Prostate gland (tissue), 2 donors: ENCODE measurements at regions of chr3 and their contacts with region 1.

Region 1: GRCh38 chr3:64533617-64534317 is 154.0 kb downstream of the ADAMTS9 start:
- DNase-seq: peak; percentile 91
- H3K4me3 ChIP-seq: no peak overlapping the region
- H3K27ac ChIP-seq: peak overlapping the region; percentile 32 to 44
- H3K4me1 ChIP-seq: no peaks in the 10 kb centered on the region
- H3K27me3 ChIP-seq: no peaks in the 10 kb centered on the region
- CTCF ChIP-seq: peak; percentile 67 to 93 (median 86)
- POLR2A ChIP-seq: no peak

Region 2: DNA sequence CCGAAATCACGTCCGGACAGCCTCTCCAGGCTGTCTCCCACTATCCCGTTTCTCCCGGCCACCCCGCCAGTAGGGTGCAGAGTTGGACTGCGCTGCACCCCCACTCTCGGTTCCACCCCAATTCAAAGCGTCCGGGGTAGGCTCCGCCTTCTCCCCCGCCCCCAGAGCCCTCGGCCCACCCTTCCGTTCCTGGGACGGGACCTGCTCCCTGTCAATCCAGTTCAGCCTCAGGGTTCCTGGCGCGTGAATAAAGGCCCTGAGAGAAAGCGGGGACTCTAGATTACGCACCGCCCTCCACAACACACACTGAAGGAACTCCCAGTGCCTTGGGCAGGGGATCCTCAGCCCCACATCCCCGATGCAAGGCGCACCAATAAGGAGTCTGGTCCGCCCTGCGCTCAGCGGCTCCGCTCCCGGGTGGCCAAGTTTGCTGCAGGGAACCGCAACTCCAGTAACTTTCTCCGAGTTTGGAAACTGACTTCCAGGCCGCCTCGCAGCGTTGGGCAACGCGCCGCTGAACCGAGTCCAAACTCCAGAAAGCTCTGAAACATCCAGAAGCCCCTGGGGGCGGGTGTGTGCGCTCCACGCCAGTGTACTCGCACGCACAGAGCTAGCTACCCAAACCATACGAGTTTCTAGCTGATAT is 152.2 kb after region 1 on chr3:
- intact Hi-C with region 1: loop called (anchors 2 kb)
- DNase-seq: peak; percentile 96
- H3K4me3 ChIP-seq: peak overlapping the region; percentile 48 to 60
- H3K27ac ChIP-seq: peak overlapping the region; percentile 93 to 94
- H3K4me1 ChIP-seq: no peaks in the 10 kb centered on the region
- H3K27me3 ChIP-seq: no peaks in the 10 kb centered on the region
- CTCF ChIP-seq: peak; percentile 18 to 73 (median 62)
- POLR2A ChIP-seq: peak; percentile 80

Region 3: DNA sequence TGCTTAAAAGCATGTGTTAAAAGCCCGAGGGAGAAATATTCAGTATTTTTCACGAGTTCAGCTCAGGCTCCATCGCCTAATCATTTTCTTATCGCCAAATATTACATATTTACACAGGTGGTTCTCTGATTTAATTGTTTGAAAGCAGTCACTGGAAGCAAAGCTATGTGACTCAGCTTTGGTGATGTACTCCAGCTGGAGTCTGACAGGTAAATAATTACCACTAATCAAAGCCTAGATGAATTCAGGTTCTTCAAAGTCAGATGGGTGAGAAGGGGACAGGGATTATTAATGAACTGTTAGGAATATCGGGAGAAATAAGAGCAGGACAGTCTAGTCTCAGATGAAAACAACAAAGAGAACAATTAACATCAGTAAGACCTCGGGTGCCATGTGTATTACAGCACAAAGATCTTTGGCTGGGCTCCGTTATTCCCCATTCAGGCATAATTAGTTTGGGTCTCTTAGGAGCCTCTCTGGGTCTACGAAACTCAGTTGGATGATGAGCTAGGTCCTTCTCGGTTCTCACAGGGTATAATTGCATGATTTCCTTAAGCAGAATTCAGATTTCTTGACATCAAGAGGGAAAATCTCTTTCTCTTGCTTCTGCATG is 485.8 kb after region 1 on chr3:
- intact Hi-C with region 1: loop called (anchors 10 kb)
- DNase-seq: no peak
- H3K4me3 ChIP-seq: no peak overlapping the region
- H3K27ac ChIP-seq: no peak overlapping the region
- H3K4me1 ChIP-seq: no peaks in the 10 kb centered on the region
- H3K27me3 ChIP-seq: no peaks in the 10 kb centered on the region
- CTCF ChIP-seq: no peak
- POLR2A ChIP-seq: no peak

Region 4: GRCh38 chr3:65245133-65246063 is 711.6 kb after region 1 on chr3:
- intact Hi-C with region 1: loop called (anchors 2 kb)
- DNase-seq: no peak
- H3K4me3 ChIP-seq: no peak overlapping the region
- H3K27ac ChIP-seq: no peak overlapping the region
- H3K4me1 ChIP-seq: no peaks in the 10 kb centered on the region
- H3K27me3 ChIP-seq: no peaks in the 10 kb centered on the region
- CTCF ChIP-seq: peak in 3 of 4 experiments; percentile 35 to 57 (median 51)
- POLR2A ChIP-seq: no peak

Region 5: DNA sequence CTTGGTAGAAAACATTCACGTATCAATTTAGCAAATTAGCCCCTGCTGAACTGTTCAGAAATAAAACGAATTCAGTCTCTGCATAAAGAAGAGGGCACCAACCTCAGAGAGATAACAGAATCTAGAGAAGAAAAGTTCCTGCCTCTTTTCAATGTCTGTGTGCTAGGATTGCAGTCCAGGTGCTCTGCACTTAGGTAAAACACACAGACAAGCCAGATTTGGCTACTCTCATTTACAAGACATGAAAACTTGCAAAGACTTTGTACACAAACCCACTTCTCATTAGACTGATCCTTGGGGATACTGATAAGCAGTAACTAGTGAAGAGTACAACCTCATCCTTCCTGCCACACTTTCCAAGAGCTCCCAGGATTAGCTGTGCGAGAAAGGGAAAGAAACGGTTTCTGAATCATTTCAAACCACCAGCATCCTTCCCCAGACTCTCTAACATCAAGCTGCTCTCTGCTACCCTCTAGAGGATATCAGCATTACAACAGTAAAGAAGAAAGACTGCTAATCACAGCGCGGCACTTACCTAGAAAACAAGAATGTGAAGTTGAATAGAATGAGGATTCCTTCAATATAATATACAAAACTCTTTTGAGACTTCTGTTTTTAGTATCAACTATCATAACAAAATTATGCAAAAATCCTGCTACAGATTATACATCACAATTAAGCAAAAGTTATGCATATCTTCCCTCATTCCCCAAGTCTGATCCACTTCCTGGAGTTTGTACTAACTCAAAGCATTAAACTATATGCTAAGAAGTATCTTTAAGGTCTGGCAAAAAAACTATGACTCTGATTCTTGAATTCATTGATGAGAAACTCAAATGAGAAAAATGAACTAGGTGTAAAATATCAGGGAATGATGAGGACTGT is 1198.5 kb after region 1 on chr3:
- intact Hi-C with region 1: loop called (anchors 5 kb)
- DNase-seq: peak; percentile 33
- H3K4me3 ChIP-seq: no peak overlapping the region
- H3K27ac ChIP-seq: no peak overlapping the region
- H3K4me1 ChIP-seq: no peaks in the 10 kb centered on the region
- H3K27me3 ChIP-seq: no peaks in the 10 kb centered on the region
- CTCF ChIP-seq: peak; percentile 27 to 63 (median 60)
- POLR2A ChIP-seq: no peak